Pancreas (tissue), 10 donors: ENCODE measurements at regions of chr1 and their contacts with region 1.

Region 1: DNA sequence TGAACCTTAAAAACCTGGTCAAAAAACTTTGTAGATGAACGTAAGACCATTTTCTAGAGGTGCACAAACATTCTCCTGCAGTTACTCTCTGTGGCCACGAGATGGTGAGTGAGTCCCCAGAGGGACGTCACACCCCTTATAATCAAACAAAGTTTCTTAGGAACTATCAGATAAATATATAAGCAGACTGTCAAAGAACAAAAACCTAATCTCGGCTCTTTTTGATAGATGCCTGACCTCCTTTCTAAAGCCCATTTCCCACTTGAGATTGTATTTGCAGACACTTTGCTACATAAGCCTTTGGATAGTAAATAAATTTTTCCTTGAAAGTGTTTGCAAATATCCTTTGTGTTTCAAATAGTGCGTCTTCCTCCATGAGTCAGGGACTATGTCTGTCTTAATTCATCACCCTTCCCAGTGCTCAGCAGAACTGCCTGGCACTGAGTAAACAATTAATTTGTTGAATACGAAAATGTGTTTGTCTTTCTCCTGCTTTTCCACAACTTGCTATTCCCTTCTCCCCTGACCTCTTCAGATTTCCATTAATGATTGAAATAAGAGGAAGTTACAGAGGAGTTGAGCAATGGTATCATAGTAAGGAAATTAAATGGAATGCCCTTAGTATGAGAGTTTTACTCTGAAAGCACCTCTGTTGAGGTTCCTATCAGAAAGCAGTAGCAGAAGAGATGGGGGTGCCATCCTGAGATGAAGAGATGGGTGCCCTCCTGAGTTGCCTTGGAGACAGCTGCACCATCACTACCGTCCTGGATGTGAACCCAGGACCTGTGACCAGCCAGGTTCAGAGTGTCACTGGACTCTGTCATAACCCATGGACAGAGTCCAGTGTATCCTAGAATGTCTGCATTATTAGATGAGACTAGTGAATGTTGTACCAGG is 57.8 kb upstream of the RAVER2 start:
- DNase-seq: peak in 2 of 6 donors; percentile 20 to 35
- ATAC-seq: peak; percentile 87 to 96 (median 94)
- H3K4me3 ChIP-seq: no peak overlapping the region
- H3K27ac ChIP-seq: peak overlapping the region in 2 of 4 donors; percentile 47 to 58
- H3K4me1 ChIP-seq: peaks cover 0 to 8% (median 5%) of the 10 kb centered on the region in 3 donors
- H3K27me3 ChIP-seq: no peaks in the 10 kb centered on the region
- CTCF ChIP-seq: peak; percentile 56 to 82 (median 76)

Region 2: DNA sequence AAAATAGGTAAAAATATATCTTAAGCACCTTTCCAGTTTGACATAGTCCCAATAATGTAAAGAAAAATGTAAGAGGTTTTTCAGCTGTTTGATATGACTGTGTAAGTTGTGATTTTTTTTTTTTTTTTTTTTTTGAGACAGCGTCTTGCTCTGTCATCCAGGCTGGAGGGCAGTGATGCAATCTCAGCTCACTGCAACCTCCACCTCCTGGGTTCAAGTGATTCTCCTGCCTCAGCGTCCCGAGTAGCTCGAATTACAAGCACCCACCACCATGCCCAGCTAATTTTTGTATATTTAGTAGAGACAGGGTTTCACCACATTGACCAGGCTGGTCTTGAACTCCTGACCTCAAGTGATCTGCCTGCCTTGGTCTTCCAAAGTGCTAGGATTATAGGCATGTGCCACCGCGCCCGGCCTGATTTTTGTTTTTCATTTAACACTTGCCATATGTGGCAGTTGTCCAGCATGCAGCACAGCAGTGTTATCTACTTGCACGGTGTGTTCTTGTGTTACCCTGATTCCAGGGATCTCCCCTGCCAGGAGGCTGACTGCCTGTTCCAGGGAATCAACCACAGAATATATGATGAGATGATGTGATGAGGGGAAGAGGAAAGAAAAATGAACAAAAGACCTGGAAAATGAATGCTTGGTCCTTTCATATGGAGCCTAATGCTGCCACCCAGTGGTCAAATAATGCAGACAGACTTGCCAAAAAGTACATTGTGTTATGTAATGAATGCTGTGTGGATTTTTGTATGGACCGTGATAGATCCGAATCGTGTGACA is 136.8 kb after region 1 on chr1:
- intact Hi-C with region 1: loop called in 2 of 3 experiments (anchors 5 to 10 kb)
- DNase-seq: peak in 4 of 6 donors; percentile 42 to 71 (median 56)
- ATAC-seq: peak; percentile 88 to 97 (median 94)
- H3K4me3 ChIP-seq: no peak overlapping the region
- H3K27ac ChIP-seq: no peak overlapping the region
- H3K4me1 ChIP-seq: no peaks in the 10 kb centered on the region
- H3K27me3 ChIP-seq: no peaks in the 10 kb centered on the region
- CTCF ChIP-seq: peak; percentile 57 to 82 (median 74)